ENCODE measurements at regions of chr17 and their contacts with region 1.

Region 1: GRCh38 chr17:43576563-43577229 is 30.6 kb upstream of the ETV4 start:
- DNase-seq: peak; percentile 49
- ATAC-seq: peak; percentile 66
- H3K4me3 ChIP-seq: no peak overlapping the region
- H3K27ac ChIP-seq: no peak overlapping the region
- H3K4me1 ChIP-seq: peaks cover 18% of the 10 kb centered on the region
- H3K27me3 ChIP-seq: no peaks in the 10 kb centered on the region
- CTCF ChIP-seq: peak; percentile 81 to 85 (median 82)
- EP300 ChIP-seq: no peak
- POLR2A ChIP-seq: no peak
- RAD21 ChIP-seq: peak; percentile 92

Region 2: DNA sequence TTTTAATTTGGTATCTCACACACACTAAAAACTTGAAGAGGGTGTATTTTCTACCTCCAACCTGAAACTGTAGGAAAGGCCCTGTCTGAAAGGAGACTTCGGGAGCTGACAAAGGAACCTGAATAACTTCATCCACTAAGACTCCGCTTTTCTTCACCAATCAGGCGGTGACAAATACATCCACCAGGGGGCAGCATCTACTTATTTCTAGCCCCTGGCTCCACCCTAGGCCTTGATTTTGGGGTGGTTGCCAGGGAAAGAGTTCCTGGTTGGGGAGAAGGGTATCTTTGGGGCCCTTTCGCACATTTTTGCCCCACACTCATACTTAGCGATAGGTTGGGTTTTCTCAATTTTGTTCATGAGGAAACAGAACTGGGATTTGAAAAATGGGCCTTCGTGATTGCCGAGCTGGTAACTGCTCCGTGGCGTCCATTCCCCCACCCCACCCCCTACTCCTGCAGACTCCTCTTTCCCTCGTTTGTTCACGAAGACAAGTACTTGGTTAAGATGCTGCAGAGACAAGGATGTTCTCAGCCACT is 182.7 kb before region 1 on chr17:
- CTCF ChIA-PET with region 1: interaction called, 37 read pairs
- POLR2A ChIA-PET with region 1: no interaction called
- RAD21 ChIA-PET with region 1: interaction called, 9 read pairs
- SMC1A ChIA-PET with region 1: interaction called, 4 read pairs
- in situ Hi-C with region 1: no loop called
- intact Hi-C with region 1: no loop called
- DNase-seq: no peak
- ATAC-seq: peak; percentile 78
- H3K4me3 ChIP-seq: no peak overlapping the region
- H3K27ac ChIP-seq: no peak overlapping the region
- H3K4me1 ChIP-seq: peaks cover 4% of the 10 kb centered on the region
- H3K27me3 ChIP-seq: no peaks in the 10 kb centered on the region
- CTCF ChIP-seq: peak; percentile 81 to 89 (median 86)
- EP300 ChIP-seq: no peak
- POLR2A ChIP-seq: no peak
- RAD21 ChIP-seq: peak; percentile 95

Region 3: GRCh38 chr17:43524945-43525575 is 51.6 kb before region 1 on chr17:
- CTCF ChIA-PET with region 1: interaction called, 108 read pairs
- POLR2A ChIA-PET with region 1: no interaction called
- RAD21 ChIA-PET with region 1: interaction called, 11 read pairs
- SMC1A ChIA-PET with region 1: interaction called, 118 read pairs
- in situ Hi-C with region 1: no loop called
- intact Hi-C with region 1: loop called (anchors 5 kb)
- DNase-seq: no peak
- ATAC-seq: no peak
- H3K4me3 ChIP-seq: no peak overlapping the region
- H3K27ac ChIP-seq: no peak overlapping the region
- H3K4me1 ChIP-seq: no peaks in the 10 kb centered on the region
- H3K27me3 ChIP-seq: no peaks in the 10 kb centered on the region
- CTCF ChIP-seq: no peak
- EP300 ChIP-seq: no peak
- POLR2A ChIP-seq: no peak
- RAD21 ChIP-seq: no peak

Region 4: GRCh38 chr17:43562679-43563599 is 13.8 kb before region 1 on chr17:
- CTCF ChIA-PET with region 1: interaction called, 7 read pairs
- POLR2A ChIA-PET with region 1: interaction called, 6 read pairs
- RAD21 ChIA-PET with region 1: interaction called, 6 read pairs
- SMC1A ChIA-PET with region 1: interaction called, 10 read pairs
- in situ Hi-C with region 1: no loop called
- intact Hi-C with region 1: no loop called
- DNase-seq: no peak
- ATAC-seq: no peak
- H3K4me3 ChIP-seq: no peak overlapping the region
- H3K27ac ChIP-seq: no peak overlapping the region
- H3K4me1 ChIP-seq: no peaks in the 10 kb centered on the region
- H3K27me3 ChIP-seq: peaks cover 3 to 6% of the 10 kb centered on the region in 2 experiments; a peak in 2 of 4 replicates
- CTCF ChIP-seq: no peak
- EP300 ChIP-seq: no peak
- POLR2A ChIP-seq: no peak
- RAD21 ChIP-seq: no peak

Region 5: GRCh38 chr17:43673516-43674323 is 97.0 kb after region 1 on chr17:
- CTCF ChIA-PET with region 1: no interaction called
- POLR2A ChIA-PET with region 1: interaction called, 6 read pairs
- RAD21 ChIA-PET with region 1: interaction called, 334 read pairs
- SMC1A ChIA-PET with region 1: no interaction called
- in situ Hi-C with region 1: loop called (anchors 5 kb)
- intact Hi-C with region 1: loop called (anchors 1 kb)
- DNase-seq: no peak
- ATAC-seq: peak; percentile 48
- H3K4me3 ChIP-seq: no peak overlapping the region
- H3K27ac ChIP-seq: no peak overlapping the region
- H3K4me1 ChIP-seq: peaks cover 42% of the 10 kb centered on the region
- H3K27me3 ChIP-seq: no peaks in the 10 kb centered on the region
- CTCF ChIP-seq: peak; percentile 92 to 97 (median 94)
- EP300 ChIP-seq: no peak
- POLR2A ChIP-seq: no peak
- RAD21 ChIP-seq: peak; percentile 76

Region 6: DNA sequence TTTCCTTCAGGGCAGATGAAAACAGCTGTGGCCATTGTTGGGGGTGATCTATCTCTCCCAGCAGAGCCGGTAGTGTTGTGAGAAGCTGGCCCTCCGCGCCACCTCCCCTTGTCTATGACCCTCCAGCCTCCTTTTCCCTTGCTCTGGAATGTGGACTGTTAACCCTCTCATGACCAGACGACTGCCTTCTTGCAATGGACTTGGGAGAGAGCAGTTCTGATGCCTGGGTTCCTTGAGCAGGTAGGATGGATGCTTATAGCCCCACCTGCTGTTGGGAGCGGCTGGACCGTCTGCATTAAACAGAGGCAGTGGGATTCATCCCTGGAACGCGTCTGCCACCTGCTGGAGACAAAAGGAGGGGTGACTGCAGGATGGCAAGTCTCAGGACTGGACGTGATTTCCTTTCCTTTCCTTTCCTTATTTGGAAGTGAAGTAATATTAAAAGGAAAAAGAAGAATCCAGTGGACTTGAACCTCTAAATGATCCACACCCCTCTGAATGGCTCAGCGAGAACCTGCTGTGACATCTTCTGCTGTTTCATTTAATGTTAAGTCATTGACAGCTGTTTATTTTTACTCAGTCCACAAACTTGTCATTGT is 183.7 kb after region 1 on chr17:
- CTCF ChIA-PET with region 1: interaction called, 134 read pairs
- POLR2A ChIA-PET with region 1: no interaction called
- RAD21 ChIA-PET with region 1: interaction called, 20 read pairs
- SMC1A ChIA-PET with region 1: interaction called, 17 read pairs
- in situ Hi-C with region 1: loop called (anchors 5 kb)
- intact Hi-C with region 1: loop called (anchors 2 kb)
- DNase-seq: peak; percentile 53
- ATAC-seq: peak; percentile 96
- H3K4me3 ChIP-seq: no peak overlapping the region
- H3K27ac ChIP-seq: no peak overlapping the region
- H3K4me1 ChIP-seq: no peaks in the 10 kb centered on the region
- H3K27me3 ChIP-seq: peaks cover 5 to 6% of the 10 kb centered on the region in 2 experiments
- CTCF ChIP-seq: peak; percentile 95 to 100 (median 100); a peak in 5 of 6 replicates
- EP300 ChIP-seq: no peak
- POLR2A ChIP-seq: no peak
- RAD21 ChIP-seq: peak; percentile 96

Measured in GM12878 (cell line).